AG04449 (cell line): ENCODE measurements at regions of chr3 and their contacts with region 1.

Region 1: DNA sequence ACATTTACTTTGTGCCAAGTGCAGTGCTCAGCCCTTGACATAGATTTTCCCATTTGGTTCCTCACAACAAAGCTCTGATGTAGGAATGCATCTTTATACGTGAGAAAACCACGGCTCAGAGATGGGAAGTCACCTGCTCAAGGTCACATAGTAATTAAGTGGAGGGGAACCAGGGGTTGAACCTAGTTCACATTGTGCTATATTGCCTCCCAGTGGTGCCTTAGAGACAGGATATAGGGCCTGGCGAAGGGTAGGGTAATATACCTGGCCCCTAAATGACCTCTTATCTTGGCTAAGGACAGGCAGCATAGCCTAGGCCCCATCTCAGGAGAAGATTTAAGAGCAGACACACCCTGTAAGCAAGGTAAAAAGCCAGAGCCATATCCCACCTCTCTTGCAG is 71.5 kb downstream of the FOXP1 start:
- DNase-seq: no peak
- H3K4me3 ChIP-seq: no peak overlapping the region
- CTCF ChIP-seq: no peak

Region 2: GRCh38 chr3:71425491-71426071 is 86.4 kb before region 1 on chr3:
- CTCF ChIA-PET with region 1: no interaction called
- POLR2A ChIA-PET with region 1: interaction called, 13 read pairs
- DNase-seq: peak; percentile 78
- H3K4me3 ChIP-seq: no peak overlapping the region
- CTCF ChIP-seq: no peak

Region 3: GRCh38 chr3:71495708-71496472 is 16.1 kb before region 1 on chr3:
- CTCF ChIA-PET with region 1: interaction called, 5 read pairs
- POLR2A ChIA-PET with region 1: interaction called, 20 read pairs
- DNase-seq: peak; percentile 82
- H3K4me3 ChIP-seq: no peak overlapping the region
- CTCF ChIP-seq: no peak

Region 4: DNA sequence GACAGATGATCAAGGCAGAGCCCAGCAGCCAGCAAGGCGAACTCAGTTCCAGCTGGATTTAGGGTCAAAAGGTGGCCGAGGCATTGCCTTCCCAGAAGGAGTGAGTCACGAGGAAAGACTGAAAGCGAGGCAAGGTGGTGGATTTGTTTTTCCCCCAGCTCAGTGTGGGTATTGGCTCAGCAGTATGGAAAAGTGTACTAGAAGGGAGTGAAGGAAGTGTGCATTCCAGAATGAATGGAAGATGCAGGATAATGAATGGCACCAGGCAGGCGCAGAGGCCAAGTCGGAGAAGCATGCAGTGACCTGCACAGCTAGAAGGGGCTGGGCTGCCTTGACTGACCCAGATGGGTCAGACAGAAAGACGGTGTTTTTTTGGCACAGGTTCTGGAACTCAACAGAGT is 25.2 kb after region 1 on chr3:
- CTCF ChIA-PET with region 1: interaction called, 4 read pairs
- POLR2A ChIA-PET with region 1: interaction called, 22 read pairs
- DNase-seq: peak; percentile 81
- H3K4me3 ChIP-seq: peak overlapping the region; percentile 6; the same call in 1 of the 2 replicates
- CTCF ChIP-seq: no peak

Region 5: GRCh38 chr3:71593096-71593495 is 81.1 kb after region 1 on chr3:
- CTCF ChIA-PET with region 1: no interaction called
- POLR2A ChIA-PET with region 1: no interaction called
- DNase-seq: no peak
- H3K4me3 ChIP-seq: no peak overlapping the region
- CTCF ChIP-seq: no peak

Region 6: DNA sequence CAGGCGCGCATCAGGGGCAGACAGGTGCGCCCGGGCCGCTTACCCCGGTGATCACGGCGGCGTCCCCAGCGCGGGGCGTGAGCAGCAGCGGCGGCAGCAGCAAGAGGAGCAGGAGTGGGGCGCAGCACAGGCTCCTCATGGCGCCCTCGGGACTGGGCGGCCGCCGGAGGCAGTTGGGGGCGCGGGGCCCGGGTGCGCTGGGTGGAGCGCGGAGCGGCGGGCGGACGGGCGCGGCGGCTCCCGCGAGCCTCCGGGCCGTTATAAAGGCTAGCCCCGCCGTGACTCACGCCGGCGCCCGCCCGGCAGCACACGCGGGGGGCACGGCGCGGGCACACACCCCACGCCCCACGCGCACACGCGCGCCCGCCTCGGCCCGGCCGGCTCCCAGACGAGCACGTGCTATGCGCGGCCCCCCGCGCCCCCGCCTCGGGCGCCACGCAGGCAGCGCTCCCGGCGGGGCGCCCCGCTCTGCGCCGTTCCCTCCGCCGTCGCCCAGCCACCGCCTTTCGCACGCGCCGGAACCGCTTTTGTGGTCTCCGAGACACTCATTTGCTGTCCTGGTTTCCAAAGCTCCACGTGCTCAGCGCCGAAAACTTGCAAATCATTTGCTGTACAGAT is 273.0 kb after region 1 on chr3 and contains the start of gene PROK2:
- CTCF ChIA-PET with region 1: no interaction called
- POLR2A ChIA-PET with region 1: no interaction called
- DNase-seq: no peak
- H3K4me3 ChIP-seq: no peak within 1 kb of the TSS
- CTCF ChIP-seq: no peak